ENCODE measurements at regions of chr10 and their contacts with region 1.

Region 1: DNA sequence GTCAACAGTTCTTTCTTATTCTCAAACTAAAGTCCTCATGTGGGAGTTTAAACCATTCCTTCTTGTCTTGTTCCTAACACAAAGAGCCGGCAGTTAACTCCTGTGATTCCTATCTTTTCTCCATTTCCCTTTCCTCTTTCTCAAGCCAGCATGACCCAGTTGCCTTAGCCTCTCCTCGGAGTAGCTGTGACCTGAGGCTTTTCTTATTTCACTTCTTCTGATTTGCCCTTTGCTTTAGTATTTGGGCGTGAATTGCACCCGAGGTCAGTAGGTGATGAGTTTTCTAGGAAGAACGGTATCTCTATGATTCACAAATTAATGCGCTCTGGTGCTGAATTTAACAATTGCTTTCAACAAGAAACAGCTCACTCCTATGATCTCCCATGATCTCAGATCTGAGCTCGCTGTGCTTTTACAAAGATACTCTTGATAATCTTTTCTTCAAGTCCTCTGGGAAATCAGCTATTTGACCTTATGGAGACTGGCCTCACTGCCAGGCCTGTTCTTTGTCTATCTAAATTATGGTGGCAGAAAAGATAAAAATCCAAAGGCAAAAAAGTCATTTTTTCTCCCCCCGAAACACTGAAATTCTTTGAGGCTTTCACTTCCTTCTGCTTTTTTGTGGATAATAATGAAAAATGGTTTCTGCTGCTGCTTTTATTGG is 184.6 kb downstream of the JCAD start:
- DNase-seq: no peak
- H3K4me3 ChIP-seq: no peak overlapping the region
- H3K27ac ChIP-seq: no peak overlapping the region
- H3K4me1 ChIP-seq: peaks cover 0 to 16% (median 10%) of the 10 kb centered on the region in 4 donors
- H3K27me3 ChIP-seq: no peaks in the 10 kb centered on the region
- CTCF ChIP-seq: no peak
- EP300 ChIP-seq: no peak
- POLR2A ChIP-seq: no peak

Region 2: DNA sequence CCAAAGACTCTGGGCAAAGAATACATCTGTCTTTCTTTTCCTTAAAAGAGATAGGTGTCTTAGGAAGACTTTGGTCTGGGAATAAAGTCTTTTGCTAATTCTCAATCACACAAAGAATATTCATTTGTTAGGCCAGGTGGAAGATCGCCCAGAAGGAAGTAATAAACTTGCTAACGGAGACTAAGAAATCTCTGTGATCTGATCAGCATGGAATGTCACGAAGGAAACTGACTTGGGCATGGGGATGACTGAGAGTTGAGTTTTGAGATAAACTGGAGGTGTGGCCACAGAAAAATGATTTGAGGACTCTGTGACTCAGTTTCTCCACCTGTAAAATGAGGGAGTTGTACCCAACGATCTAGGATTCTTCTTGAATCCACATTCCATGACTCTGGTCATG is 78.9 kb before region 1 on chr10:
- intact Hi-C with region 1: no loop called
- DNase-seq: no peak
- H3K4me3 ChIP-seq: peak overlapping the region in 1 of 4 donors; percentile 1
- H3K27ac ChIP-seq: peak overlapping the region; percentile 83 to 94 (median 90)
- H3K4me1 ChIP-seq: peaks cover 0 to 56% (median 55%) of the 10 kb centered on the region in 4 donors
- H3K27me3 ChIP-seq: no peaks in the 10 kb centered on the region
- CTCF ChIP-seq: no peak
- EP300 ChIP-seq: no peak
- POLR2A ChIP-seq: no peak

Region 3: DNA sequence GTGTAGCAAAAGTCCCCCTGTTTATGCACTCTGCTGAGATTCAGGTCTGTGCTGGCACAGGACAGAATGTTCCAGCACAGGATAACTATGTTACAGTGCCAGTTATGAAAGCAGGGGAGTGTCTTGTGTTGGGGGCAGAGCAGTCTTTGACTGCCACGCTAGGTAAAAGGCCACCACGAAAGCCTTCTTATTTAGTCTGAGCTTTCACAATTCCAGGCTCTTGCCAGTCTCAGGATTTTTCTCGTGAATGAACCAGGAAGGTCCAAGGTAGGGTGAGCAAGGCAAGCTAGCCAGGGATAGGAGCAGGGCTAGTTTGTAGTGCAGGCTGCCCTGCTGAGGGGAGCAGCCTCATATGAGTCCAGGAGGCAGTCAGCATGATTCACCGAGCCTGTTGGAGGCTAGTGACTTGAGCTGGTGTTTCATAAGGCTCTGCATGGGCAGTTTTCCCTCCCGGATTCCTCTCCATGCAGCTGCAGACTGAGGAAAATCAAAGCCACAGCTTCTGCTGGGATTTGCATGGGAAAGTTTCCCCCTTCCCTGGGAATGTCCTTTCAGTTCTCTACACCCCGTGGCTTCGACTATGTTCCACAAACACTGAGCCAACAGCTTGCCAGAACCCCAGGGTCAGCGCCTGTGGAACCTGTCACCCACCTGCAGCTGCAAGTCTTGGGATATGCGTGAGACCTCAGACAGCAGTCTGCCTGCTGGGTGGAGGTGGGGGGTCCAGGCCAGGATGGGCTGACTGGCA is 72.4 kb after region 1 on chr10:
- intact Hi-C with region 1: loop called (anchors 5 kb)
- DNase-seq: peak; percentile 88
- H3K4me3 ChIP-seq: no peak overlapping the region
- H3K27ac ChIP-seq: peak overlapping the region; percentile 72 to 84 (median 78)
- H3K4me1 ChIP-seq: peaks cover 0 to 35% (median 26%) of the 10 kb centered on the region in 4 donors
- H3K27me3 ChIP-seq: no peaks in the 10 kb centered on the region
- CTCF ChIP-seq: no peak
- EP300 ChIP-seq: peak; percentile 86 to 98 (median 88)
- POLR2A ChIP-seq: no peak

Measured in sigmoid colon (tissue), 7 donors.